AG04450 (cell line): ENCODE measurements at regions of chr19 and their contacts with region 1.

Region 1: DNA sequence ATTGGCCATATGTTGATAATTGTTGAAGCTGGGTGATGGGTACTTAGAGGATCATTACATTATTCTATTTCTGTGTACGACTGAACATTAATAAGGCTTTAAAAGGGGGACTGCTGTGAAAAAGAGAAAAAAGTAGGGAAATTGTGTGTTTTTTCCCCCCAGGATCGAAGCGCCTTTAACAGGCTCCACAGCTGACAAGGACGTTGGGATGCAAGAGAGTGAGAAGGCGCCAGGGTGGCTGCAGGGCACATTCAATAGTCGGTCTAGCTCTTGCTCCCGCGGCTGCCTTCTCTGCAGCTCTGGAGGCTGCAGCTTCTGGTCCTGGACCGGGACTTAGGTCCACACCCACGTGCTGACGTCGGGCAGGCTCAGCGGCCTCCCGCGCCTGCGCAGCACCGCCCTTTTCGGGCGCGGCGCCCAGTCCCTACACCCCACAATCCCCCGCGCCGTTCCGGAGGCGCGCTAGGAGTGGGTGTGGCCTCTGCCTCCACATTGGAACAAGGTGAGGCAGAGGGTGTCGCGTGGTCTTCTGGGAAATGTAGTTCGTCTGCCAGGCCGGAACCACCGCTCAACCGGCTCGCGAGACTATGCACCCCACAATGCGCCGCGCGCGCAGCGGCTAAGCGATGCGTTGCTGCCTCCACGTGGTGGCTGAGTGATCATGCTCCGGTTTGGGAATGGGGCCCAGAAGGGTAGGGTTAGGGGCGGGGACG is 4.9 kb upstream of the LRFN3 start:
- DNase-seq: peak; percentile 99
- H3K4me3 ChIP-seq: peak overlapping the region; percentile 51
- H3K27ac ChIP-seq: peak overlapping the region; percentile 11
- H3K27me3 ChIP-seq: no peaks in the 10 kb centered on the region
- CTCF ChIP-seq: peak; percentile 90

Region 2: GRCh38 chr19:35767288-35768081 is 163.8 kb before region 1 on chr19:
- CTCF ChIA-PET with region 1: no interaction called
- POLR2A ChIA-PET with region 1: no interaction called
- DNase-seq: no peak
- H3K4me3 ChIP-seq: no peak overlapping the region
- H3K27ac ChIP-seq: no peak overlapping the region
- H3K27me3 ChIP-seq: no peaks in the 10 kb centered on the region
- CTCF ChIP-seq: no peak

Region 3: GRCh38 chr19:35882114-35882832 is 49.0 kb before region 1 on chr19:
- CTCF ChIA-PET with region 1: interaction called, 66 read pairs
- POLR2A ChIA-PET with region 1: interaction called, 4 read pairs
- DNase-seq: peak; percentile 61
- H3K4me3 ChIP-seq: no peak overlapping the region
- H3K27ac ChIP-seq: no peak overlapping the region
- H3K27me3 ChIP-seq: no peaks in the 10 kb centered on the region
- CTCF ChIP-seq: peak; percentile 66

Region 4: DNA sequence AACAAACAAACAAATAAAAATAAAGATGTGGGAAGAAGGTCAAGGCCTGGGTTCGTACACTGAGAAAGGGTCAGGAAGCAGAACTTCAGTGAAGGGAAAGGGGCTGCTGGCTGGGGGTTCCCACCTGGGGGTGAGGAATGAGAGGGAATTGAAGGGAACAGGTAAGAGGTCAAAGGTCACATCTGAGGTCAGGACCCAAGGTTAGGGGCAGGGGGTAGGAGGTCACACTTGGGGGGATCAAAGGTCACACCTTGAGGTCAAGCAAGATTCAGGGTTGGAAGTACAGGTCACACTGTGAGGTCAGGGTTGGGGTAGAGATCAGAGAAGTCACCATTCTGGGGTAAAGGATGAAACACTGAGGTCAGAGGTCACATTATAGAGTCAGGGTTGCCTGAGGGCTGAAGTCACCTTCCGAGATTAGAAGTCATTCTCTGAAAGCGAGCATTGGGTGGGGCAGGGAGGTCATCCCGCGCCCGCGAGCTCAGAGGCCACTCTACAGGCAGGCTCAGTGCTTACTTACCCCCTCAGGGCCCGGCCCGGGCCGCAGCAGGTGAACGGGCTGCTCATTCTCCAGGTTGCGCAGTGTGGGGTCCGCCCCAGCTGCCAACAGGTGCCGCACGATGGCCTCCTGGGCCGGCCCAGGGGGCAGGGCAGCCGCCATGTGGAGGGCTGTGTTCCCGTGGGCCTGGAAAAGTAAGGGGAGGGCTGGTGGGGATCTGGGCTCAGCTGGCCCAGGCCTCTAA is 41.8 kb before region 1 on chr19:
- CTCF ChIA-PET with region 1: interaction called, 66 read pairs
- POLR2A ChIA-PET with region 1: interaction called, 3 read pairs
- DNase-seq: no peak
- H3K4me3 ChIP-seq: no peak overlapping the region
- H3K27ac ChIP-seq: no peak overlapping the region
- H3K27me3 ChIP-seq: no peaks in the 10 kb centered on the region
- CTCF ChIP-seq: no peak

Region 5: GRCh38 chr19:35904312-35905068 is 26.8 kb before region 1 on chr19:
- CTCF ChIA-PET with region 1: interaction called, 10 read pairs
- POLR2A ChIA-PET with region 1: interaction called, 4 read pairs
- DNase-seq: no peak
- H3K4me3 ChIP-seq: no peak overlapping the region
- H3K27ac ChIP-seq: peak overlapping the region; percentile 61
- H3K27me3 ChIP-seq: no peaks in the 10 kb centered on the region
- CTCF ChIP-seq: no peak